AG04450 (cell line): ENCODE measurements at regions of chr12 and their contacts with region 1.

Region 1: DNA sequence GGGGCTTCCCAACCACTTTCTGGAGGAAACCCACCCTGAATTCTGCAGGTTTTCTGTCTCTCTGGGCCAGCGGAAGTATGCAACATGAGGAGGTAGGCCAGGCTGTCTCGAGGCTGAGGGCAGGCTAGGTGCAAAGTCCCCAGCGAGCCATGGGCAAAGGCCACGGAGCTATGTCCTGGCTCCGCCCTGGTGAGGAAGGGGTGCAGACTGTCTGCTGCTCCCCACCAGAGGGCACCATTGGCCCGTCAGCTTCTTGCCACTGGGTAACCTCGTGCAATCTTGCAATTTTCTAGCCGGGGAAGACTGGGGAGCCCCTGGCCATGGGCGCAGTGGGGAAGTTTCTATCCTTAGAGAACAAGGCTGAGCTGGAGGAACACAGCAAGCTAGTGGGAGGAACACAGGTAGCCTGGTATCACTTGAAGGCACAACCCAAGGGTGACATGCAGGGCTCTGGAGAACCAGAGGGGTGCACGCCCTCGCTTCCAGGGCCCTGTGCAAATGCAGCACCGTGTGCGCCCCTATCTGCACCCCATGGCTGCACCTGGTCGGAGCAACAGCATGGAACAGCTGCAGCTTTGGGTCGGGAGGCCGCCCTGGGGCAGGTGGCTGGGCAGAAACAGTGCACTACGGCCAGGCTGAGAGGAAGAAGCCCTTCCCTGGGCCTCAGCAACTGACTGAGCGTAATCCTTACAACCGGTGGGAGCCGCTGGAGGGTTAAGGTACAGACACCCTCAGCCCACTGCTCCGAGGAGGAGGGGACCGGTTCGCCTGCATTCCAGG is 27.6 kb upstream of the RPLP0 start:
- DNase-seq: peak; percentile 61
- H3K4me3 ChIP-seq: no peak overlapping the region; the same call in 1 of the 2 replicates
- H3K27ac ChIP-seq: peak overlapping the region; percentile 99
- H3K27me3 ChIP-seq: no peaks in the 10 kb centered on the region
- CTCF ChIP-seq: peak; percentile 95

Region 2: GRCh38 chr12:120216742-120217605 is 11.5 kb before region 1 on chr12:
- CTCF ChIA-PET with region 1: interaction called, 15 read pairs
- POLR2A ChIA-PET with region 1: interaction called, 3 read pairs
- DNase-seq: no peak
- H3K4me3 ChIP-seq: no peak overlapping the region
- H3K27ac ChIP-seq: no peak overlapping the region
- H3K27me3 ChIP-seq: no peaks in the 10 kb centered on the region
- CTCF ChIP-seq: no peak

Region 3: GRCh38 chr12:120257041-120257821 is 28.8 kb after region 1 on chr12:
- CTCF ChIA-PET with region 1: interaction called, 685 read pairs
- POLR2A ChIA-PET with region 1: interaction called, 118 read pairs
- DNase-seq: peak; percentile 84
- H3K4me3 ChIP-seq: peak overlapping the region; percentile 35
- H3K27ac ChIP-seq: peak overlapping the region; percentile 82
- H3K27me3 ChIP-seq: no peaks in the 10 kb centered on the region
- CTCF ChIP-seq: peak; percentile 4; the same call in 1 of the 2 replicates

Region 4: DNA sequence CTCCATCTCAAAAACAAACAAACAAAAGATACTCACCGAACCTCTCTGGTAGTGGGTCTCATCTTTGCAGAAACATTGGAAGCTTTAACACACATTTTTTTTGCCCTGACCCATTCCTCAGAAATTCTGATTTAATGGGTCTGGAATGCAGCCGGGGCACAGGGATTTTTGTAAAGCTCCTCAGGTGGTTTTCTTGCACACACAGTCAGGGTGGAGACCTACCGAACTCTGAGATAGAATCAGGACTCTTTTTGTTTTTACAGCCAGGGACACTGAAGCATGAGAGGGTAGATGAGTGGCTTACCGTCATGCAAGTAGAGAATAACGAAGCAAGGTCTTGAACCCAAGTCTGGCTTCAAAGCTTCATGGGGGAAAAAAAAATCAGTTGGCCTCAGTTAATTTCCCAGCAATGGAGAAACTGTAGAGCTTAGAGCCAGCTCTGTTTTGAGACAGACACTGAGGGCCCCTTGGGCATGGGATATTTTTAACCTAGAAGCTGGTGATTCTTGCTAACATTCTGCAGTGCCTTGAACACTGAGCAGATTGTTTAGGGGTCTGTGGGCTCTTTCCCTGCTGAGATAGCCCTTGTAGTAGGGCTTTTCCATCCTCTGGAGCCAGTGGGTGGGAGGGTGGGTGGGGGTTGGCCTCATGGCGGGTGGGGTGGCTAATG is 58.5 kb after region 1 on chr12:
- CTCF ChIA-PET with region 1: interaction called, 68 read pairs
- POLR2A ChIA-PET with region 1: interaction called, 245 read pairs
- DNase-seq: no peak
- H3K4me3 ChIP-seq: no peak overlapping the region
- H3K27ac ChIP-seq: no peak overlapping the region
- H3K27me3 ChIP-seq: no peaks in the 10 kb centered on the region
- CTCF ChIP-seq: no peak

Region 5: GRCh38 chr12:120421701-120422100 is 193.2 kb after region 1 on chr12:
- CTCF ChIA-PET with region 1: no interaction called
- POLR2A ChIA-PET with region 1: interaction called, 11 read pairs
- DNase-seq: no peak
- H3K4me3 ChIP-seq: no peak overlapping the region
- H3K27ac ChIP-seq: no peak overlapping the region
- H3K27me3 ChIP-seq: peaks cover 7% of the 10 kb centered on the region
- CTCF ChIP-seq: no peak

Region 6: DNA sequence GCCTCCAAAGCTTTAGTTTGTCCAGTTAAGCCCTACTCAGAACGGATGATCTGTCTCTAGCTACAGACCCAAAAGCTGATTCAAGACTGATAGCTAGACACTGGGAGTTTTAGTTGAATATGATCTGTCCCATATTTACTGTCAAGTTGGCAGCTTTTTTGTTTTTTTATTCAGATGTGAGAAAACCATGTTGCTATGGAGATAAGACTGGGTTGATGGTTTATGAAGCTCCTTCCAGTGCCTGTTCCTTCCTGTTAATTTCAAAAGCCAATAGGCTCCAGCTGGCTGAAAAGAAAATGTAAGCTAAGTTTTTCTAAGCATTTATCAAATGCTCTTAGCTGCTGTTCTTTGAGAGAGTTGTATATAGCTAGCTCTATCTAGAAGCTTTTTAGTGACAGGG is 272.1 kb after region 1 on chr12:
- CTCF ChIA-PET with region 1: no interaction called
- POLR2A ChIA-PET with region 1: no interaction called
- DNase-seq: no peak
- H3K4me3 ChIP-seq: no peak overlapping the region
- H3K27ac ChIP-seq: no peak overlapping the region
- H3K27me3 ChIP-seq: no peaks in the 10 kb centered on the region
- CTCF ChIP-seq: no peak